ENCODE measurements at regions of chr2 and their contacts with region 1.

Region 1: DNA sequence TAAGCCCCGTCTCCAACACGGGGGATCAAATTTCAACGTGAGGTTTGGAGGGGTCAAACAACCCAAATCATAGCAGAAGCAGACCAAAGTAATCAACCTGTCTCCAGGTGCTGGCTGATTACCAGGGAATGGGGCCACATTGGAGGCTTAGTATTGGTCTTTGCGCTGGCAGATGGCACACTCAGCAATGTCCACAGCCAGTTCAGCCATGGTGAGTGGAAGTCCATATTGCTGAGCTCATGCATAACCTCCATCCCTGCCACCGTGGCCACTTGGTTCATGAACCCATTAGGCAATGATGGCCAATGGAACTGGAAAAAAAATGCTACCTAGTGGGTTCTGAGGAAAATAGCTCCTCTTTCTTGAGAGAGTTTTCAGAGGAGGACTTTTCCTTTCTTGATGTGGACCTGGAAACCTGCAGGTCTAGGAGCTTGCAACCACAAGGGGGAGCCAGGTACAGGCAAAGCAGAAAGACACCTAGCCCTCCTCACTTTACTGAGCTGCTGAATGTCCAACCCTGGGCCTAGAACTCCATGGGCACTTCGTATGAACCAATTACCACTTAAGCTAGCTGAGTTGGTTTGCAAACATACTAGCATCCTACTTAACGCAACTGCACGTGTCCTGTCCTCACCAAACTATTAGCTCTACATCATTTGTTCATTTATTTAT is 128.0 kb upstream of the GYPC start:
- DNase-seq: peak; percentile 49 to 83 (median 77)
- ATAC-seq: peak; percentile 73
- H3K4me3 ChIP-seq: no peak overlapping the region
- H3K4me3 Mint-ChIP-seq: no peak overlapping the region
- H3K27ac ChIP-seq: no peak overlapping the region
- H3K27ac Mint-ChIP-seq: no peak overlapping the region
- H3K4me1 ChIP-seq: no peaks in the 10 kb centered on the region
- H3K4me1 Mint-ChIP-seq: peaks cover 1% of the 10 kb centered on the region
- H3K27me3 ChIP-seq: no peaks in the 10 kb centered on the region
- H3K27me3 Mint-ChIP-seq: no peaks in the 10 kb centered on the region
- CTCF ChIP-seq: peak; percentile 78

Region 2: GRCh38 chr2:125721072-125721721 is 806.8 kb before region 1 on chr2:
- CTCF ChIA-PET with region 1: no interaction called
- POLR2A ChIA-PET with region 1: no interaction called
- intact Hi-C with region 1: no loop called
- DNase-seq: no peak
- ATAC-seq: no peak
- H3K4me3 ChIP-seq: no peak overlapping the region
- H3K4me3 Mint-ChIP-seq: no peak overlapping the region
- H3K27ac ChIP-seq: no peak overlapping the region
- H3K27ac Mint-ChIP-seq: no peak overlapping the region
- H3K4me1 ChIP-seq: no peaks in the 10 kb centered on the region
- H3K4me1 Mint-ChIP-seq: no peaks in the 10 kb centered on the region
- H3K27me3 ChIP-seq: no peaks in the 10 kb centered on the region
- H3K27me3 Mint-ChIP-seq: no peaks in the 10 kb centered on the region
- CTCF ChIP-seq: no peak

Region 3: GRCh38 chr2:126568734-126569133 is 40.8 kb after region 1 on chr2:
- CTCF ChIA-PET with region 1: interaction called, 3 read pairs
- POLR2A ChIA-PET with region 1: no interaction called
- intact Hi-C with region 1: loop called in 1 of 2 experiments (anchors 2 kb)
- DNase-seq: no peak
- ATAC-seq: no peak
- H3K4me3 ChIP-seq: no peak overlapping the region
- H3K4me3 Mint-ChIP-seq: no peak overlapping the region
- H3K27ac ChIP-seq: no peak overlapping the region
- H3K27ac Mint-ChIP-seq: no peak overlapping the region
- H3K4me1 ChIP-seq: no peaks in the 10 kb centered on the region
- H3K4me1 Mint-ChIP-seq: no peaks in the 10 kb centered on the region
- H3K27me3 ChIP-seq: no peaks in the 10 kb centered on the region
- H3K27me3 Mint-ChIP-seq: no peaks in the 10 kb centered on the region
- CTCF ChIP-seq: no peak

Region 4: DNA sequence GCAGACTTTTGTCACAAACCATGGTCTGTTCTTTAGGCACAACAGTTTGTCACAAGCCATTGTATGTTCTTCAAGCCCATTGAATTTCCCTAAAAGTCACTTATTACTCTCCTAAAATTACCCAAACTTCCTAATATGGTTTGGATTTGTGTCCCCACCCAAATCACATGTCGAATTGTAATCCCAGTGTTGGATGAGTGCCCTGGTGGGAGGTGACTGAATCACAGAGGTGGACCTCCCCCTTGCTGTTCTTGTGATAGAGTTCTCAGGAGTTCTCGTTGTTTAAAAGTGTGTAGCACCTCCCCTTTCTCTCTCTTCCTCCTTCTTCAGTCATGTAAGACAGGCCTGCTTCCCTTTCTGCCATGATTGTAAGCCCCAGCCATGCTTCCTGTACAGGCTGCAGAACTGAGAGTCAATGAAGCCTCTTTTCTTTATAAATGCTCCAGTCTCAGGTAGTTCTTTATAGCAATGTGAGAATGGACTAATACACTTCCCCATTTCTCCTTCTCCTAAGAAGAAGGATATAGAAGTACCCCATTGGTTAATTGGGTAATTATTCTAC is 116.7 kb after region 1 on chr2:
- CTCF ChIA-PET with region 1: interaction called, 11 read pairs
- POLR2A ChIA-PET with region 1: no interaction called
- intact Hi-C with region 1: no loop called
- DNase-seq: peak in 1 of 9 experiments; percentile 20
- ATAC-seq: no peak
- H3K4me3 ChIP-seq: no peak overlapping the region
- H3K4me3 Mint-ChIP-seq: no peak overlapping the region
- H3K27ac ChIP-seq: no peak overlapping the region
- H3K27ac Mint-ChIP-seq: no peak overlapping the region
- H3K4me1 ChIP-seq: no peaks in the 10 kb centered on the region
- H3K4me1 Mint-ChIP-seq: peaks cover 8% of the 10 kb centered on the region
- H3K27me3 ChIP-seq: no peaks in the 10 kb centered on the region
- H3K27me3 Mint-ChIP-seq: no peaks in the 10 kb centered on the region
- CTCF ChIP-seq: no peak

Region 5: DNA sequence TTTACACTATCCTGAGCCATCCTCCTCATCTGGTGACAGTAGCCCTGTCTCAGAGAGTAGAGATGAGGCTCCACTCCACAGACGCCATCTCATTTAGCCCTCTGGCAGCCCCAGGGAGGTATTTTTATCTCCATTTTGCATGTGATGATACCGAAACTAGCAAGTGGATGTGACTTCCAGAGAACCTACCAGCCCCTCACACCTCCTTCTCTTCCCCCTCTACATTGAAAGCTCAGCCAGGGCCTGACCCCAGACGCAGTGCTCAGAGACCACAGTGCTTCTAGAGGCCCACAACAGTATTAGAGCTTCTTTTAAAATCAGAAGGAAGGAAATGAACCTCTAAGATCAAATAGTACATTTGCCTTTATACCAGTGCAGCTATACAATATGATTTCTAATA is 136.3 kb after region 1 on chr2:
- CTCF ChIA-PET with region 1: interaction called, 32 read pairs
- POLR2A ChIA-PET with region 1: no interaction called
- intact Hi-C with region 1: no loop called
- DNase-seq: peak in 7 of 9 experiments; percentile 15 to 76 (median 49)
- ATAC-seq: peak; percentile 80
- H3K4me3 ChIP-seq: peak overlapping the region; percentile 2 to 17
- H3K4me3 Mint-ChIP-seq: peak overlapping the region; percentile 59
- H3K27ac ChIP-seq: peak overlapping the region; percentile 56 to 83
- H3K27ac Mint-ChIP-seq: peak overlapping the region; percentile 96
- H3K4me1 ChIP-seq: peaks cover 89% of the 10 kb centered on the region
- H3K4me1 Mint-ChIP-seq: peaks cover 97% of the 10 kb centered on the region
- H3K27me3 ChIP-seq: no peaks in the 10 kb centered on the region
- H3K27me3 Mint-ChIP-seq: no peaks in the 10 kb centered on the region
- CTCF ChIP-seq: no peak

Region 6: DNA sequence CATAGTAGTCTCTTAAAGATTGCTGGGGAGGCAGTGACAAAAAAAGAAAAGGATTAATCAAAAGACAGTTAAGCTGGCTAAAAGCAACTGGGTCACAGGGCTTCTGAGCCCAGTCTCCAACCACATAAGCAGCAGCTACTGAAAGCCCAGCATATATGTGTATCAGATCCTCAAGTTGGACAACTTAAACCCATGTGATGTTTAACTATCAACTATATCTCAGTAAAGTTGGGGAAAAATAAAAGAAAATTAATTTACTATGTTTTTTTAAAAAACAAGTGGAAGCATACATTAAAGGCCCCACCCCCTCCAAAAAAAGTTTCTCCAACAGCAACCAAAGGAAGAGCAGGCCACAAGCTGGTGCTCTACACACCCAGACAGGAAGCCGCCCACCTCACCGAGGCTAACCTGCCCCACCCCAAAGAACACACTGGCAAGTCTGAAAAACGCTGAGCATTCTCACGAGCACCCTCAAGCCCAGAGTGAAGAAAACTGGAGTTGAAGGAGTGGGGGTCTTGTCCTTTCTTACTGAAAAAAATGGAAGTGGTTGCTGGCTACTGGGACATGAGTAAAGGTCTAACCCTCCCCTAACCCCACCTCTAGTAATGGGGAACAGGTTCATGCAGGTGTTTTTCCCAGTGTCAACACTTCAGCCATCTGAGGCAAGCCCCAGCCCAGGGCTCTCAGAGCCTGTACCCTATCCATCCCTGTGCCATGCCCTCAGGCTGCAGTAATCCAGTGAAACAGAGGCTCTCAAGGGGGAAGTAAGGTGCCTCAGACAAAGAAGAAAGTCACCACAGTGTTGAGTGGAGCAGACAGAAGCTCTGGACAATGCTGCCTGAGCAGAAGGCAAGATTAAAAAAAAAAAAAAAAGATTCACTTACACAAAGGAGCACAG is 234.3 kb after region 1 on chr2:
- CTCF ChIA-PET with region 1: interaction called, 25 read pairs
- POLR2A ChIA-PET with region 1: no interaction called
- intact Hi-C with region 1: no loop called
- DNase-seq: peak; percentile 22 to 81 (median 62)
- ATAC-seq: peak; percentile 93
- H3K4me3 ChIP-seq: peak overlapping the region; percentile 9 to 36
- H3K4me3 Mint-ChIP-seq: peak overlapping the region; percentile 76
- H3K27ac ChIP-seq: peak overlapping the region; percentile 49 to 64
- H3K27ac Mint-ChIP-seq: peak overlapping the region; percentile 97
- H3K4me1 ChIP-seq: peaks cover 53% of the 10 kb centered on the region
- H3K4me1 Mint-ChIP-seq: peaks cover 83% of the 10 kb centered on the region
- H3K27me3 ChIP-seq: no peaks in the 10 kb centered on the region
- H3K27me3 Mint-ChIP-seq: no peaks in the 10 kb centered on the region
- CTCF ChIP-seq: no peak

Region 7: DNA sequence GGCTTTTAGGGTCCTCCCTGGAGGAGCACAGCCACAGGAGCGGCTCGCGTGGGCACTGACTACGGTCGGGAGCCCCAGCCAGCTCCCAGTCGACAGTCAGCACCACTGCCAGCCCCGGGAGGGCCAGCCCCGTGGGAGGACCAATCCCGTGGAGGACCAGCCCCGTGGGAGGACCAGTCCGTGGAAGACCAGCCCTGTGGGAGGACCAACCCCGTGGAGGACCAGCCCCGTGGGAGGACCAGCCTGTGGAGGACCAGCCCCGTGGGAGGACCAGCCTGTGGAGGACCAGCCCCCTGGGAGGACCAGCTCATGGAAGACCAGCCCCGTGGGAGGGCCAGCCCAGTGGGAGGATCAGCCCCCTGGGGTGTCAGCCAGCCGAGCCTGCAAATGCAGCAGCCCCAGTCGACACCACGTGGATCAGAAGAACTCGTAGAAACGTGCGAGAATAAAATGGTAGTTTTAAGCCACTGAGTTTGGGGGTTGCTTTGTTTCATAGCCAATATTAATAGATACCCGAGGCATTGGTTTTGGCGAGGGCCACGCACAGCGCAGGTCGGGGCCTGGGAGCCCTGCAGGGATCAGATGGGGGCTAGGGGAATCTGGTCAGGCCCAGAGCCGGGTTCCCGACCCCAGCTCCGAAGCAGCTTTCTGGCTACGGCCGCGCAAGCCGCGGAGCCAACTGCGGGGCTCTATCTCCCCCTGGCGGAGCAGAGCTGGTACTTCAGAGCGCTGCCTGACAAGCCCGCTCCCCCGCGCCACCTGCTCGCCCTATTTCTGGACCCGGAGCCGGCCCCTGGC is 443.7 kb after region 1 on chr2:
- CTCF ChIA-PET with region 1: interaction called, 17 read pairs
- POLR2A ChIA-PET with region 1: no interaction called
- intact Hi-C with region 1: loop called in 1 of 2 experiments (anchors 1 kb)
- DNase-seq: peak; percentile 38 to 78 (median 66)
- ATAC-seq: peak; percentile 95
- H3K4me3 ChIP-seq: peak overlapping the region; percentile 32 to 49
- H3K4me3 Mint-ChIP-seq: peak overlapping the region; percentile 76
- H3K27ac ChIP-seq: no peak overlapping the region
- H3K27ac Mint-ChIP-seq: no peak overlapping the region
- H3K4me1 ChIP-seq: peaks cover 12% of the 10 kb centered on the region
- H3K4me1 Mint-ChIP-seq: peaks cover 4% of the 10 kb centered on the region
- H3K27me3 ChIP-seq: peaks cover 0 to 4% of the 10 kb centered on the region in 2 experiments
- H3K27me3 Mint-ChIP-seq: peaks cover 39% of the 10 kb centered on the region
- CTCF ChIP-seq: peak; percentile 92

Measured in CD8-positive, alpha-beta T cell (primary cell).